SK-N-SH (cell line): ENCODE measurements at regions of chr1 and their contacts with region 1.

Region 1: DNA sequence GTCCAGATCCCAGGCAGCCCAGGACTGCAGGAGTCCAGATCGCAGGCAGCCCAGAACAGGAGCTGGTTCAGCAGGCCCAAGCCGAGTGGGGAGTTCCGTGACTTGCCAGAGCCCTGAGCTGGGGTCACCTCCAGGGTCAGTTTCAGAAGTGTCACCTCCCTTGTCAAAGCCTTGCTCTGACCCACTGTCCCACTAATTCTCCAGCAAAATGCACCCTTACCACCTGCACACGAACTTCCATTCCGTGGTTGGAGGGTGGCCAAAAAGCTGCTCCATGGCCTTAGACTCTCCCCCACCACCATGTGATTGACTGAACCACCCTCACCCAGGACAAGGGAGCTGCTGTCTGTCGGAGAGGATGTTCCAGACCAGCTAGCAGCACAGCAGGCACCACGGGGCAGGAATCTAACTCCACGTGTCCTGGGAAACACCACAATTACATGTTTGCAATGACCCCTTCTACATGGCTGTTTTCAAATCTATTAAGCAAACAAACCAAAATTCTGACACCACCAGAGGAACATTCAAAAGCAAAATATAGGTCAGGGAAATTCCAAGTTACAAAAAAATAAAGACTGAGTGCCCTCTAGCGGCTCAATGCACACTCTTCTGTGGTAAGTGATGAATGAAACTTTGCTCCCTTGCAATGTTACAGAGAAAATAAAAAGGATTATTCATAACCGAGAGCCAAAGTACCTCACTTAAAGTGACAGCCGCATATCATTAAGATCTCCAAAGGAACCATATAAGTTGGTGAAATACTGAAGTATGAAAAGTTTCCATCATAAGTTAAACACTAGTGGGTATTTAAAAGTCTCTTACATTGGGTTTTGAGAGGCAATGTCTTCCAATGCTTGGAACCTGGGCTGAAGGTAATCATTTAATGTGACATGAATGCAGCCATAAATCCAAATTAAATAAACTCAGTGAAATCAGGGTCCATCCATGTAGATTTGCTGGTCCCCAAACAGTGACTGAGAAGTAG is 76.3 kb downstream of the NPHP4 start:
- DNase-seq: peak; percentile 66
- H3K4me3 ChIP-seq: no peak overlapping the region; a peak in 1 of 4 replicates
- H3K27ac ChIP-seq: no peak overlapping the region
- H3K4me1 ChIP-seq: peaks cover 0 to 12% of the 10 kb centered on the region in 2 experiments; a peak in 1 of 4 replicates
- H3K27me3 ChIP-seq: no peaks in the 10 kb centered on the region
- CTCF ChIP-seq: peak; percentile 72
- EP300 ChIP-seq: no peak
- RAD21 ChIP-seq: peak; percentile 84

Region 2: GRCh38 chr1:5881526-5882222 is 34.2 kb before region 1 on chr1:
- CTCF ChIA-PET with region 1: no interaction called
- POLR2A ChIA-PET with region 1: no interaction called
- DNase-seq: no peak
- H3K4me3 ChIP-seq: no peak overlapping the region
- H3K27ac ChIP-seq: no peak overlapping the region
- H3K4me1 ChIP-seq: peaks cover 0 to 21% of the 10 kb centered on the region in 2 experiments; a peak in 1 of 4 replicates
- H3K27me3 ChIP-seq: no peaks in the 10 kb centered on the region
- CTCF ChIP-seq: no peak
- EP300 ChIP-seq: no peak
- RAD21 ChIP-seq: no peak

Region 3: GRCh38 chr1:5901150-5901549 is 14.7 kb before region 1 on chr1:
- CTCF ChIA-PET with region 1: interaction called, 44 read pairs
- POLR2A ChIA-PET with region 1: no interaction called
- DNase-seq: no peak
- H3K4me3 ChIP-seq: no peak overlapping the region
- H3K27ac ChIP-seq: no peak overlapping the region
- H3K4me1 ChIP-seq: no peaks in the 10 kb centered on the region; a peak in 1 of 4 replicates
- H3K27me3 ChIP-seq: no peaks in the 10 kb centered on the region
- CTCF ChIP-seq: no peak
- EP300 ChIP-seq: no peak
- RAD21 ChIP-seq: no peak

Region 4: GRCh38 chr1:5927506-5928370 is 11.9 kb after region 1 on chr1:
- CTCF ChIA-PET with region 1: interaction called, 10 read pairs
- POLR2A ChIA-PET with region 1: no interaction called
- DNase-seq: no peak
- H3K4me3 ChIP-seq: no peak overlapping the region
- H3K27ac ChIP-seq: no peak overlapping the region
- H3K4me1 ChIP-seq: no peaks in the 10 kb centered on the region; a peak in 1 of 4 replicates
- H3K27me3 ChIP-seq: no peaks in the 10 kb centered on the region
- CTCF ChIP-seq: no peak
- EP300 ChIP-seq: no peak
- RAD21 ChIP-seq: no peak

Region 5: DNA sequence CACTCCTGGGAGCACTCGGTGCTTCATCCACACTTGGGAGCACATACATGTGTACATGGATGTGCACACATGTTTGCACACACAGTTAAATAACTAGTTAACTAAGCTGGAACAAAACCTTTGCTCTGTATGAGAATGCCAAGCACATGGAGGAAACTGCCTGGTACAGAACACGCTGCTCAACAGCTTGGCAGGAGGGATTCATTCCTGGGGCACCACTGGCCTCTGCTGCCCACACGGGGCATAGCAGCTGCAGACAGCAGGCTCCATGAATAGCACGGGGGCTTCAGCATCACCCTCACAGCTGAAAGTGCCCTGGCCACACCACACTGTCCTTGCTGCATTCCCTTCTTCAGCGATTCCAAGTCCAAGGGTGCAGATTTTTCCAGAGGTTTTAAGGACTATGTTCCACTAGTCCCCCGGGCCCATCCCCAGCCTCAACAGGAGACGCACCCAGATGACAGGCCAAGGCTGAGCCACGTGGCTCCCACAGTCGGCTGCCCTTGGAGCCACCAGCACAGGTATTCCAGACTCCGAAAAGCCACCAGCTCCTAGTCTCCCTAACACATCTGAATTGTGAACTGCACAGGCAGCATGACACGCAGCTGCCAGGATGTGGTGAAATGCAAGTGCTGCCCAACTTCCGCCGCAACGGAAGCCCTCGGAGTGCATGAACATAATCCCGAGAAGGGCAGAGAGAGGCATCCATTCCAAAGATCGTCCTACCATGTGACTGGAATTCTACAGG is 59.4 kb after region 1 on chr1:
- CTCF ChIA-PET with region 1: interaction called, 55 read pairs
- POLR2A ChIA-PET with region 1: no interaction called
- DNase-seq: peak; percentile 84
- H3K4me3 ChIP-seq: peak overlapping the region in 1 of 2 experiments; percentile 39; a peak in 1 of 4 replicates
- H3K27ac ChIP-seq: no peak overlapping the region
- H3K4me1 ChIP-seq: peaks cover 0 to 21% of the 10 kb centered on the region in 2 experiments; a peak in 1 of 4 replicates
- H3K27me3 ChIP-seq: no peaks in the 10 kb centered on the region
- CTCF ChIP-seq: peak; percentile 71
- EP300 ChIP-seq: no peak
- RAD21 ChIP-seq: peak; percentile 96

Region 6: GRCh38 chr1:6330410-6330911 is 414.6 kb after region 1 on chr1:
- CTCF ChIA-PET with region 1: no interaction called
- POLR2A ChIA-PET with region 1: no interaction called
- DNase-seq: no peak
- H3K4me3 ChIP-seq: no peak overlapping the region
- H3K27ac ChIP-seq: no peak overlapping the region; a peak in 1 of 4 replicates
- H3K4me1 ChIP-seq: peaks cover 0 to 18% of the 10 kb centered on the region in 2 experiments; a peak in 1 of 4 replicates
- H3K27me3 ChIP-seq: no peaks in the 10 kb centered on the region
- CTCF ChIP-seq: no peak
- EP300 ChIP-seq: no peak
- RAD21 ChIP-seq: no peak